ENCODE measurements at regions of chr6 and their contacts with region 1.

Region 1: DNA sequence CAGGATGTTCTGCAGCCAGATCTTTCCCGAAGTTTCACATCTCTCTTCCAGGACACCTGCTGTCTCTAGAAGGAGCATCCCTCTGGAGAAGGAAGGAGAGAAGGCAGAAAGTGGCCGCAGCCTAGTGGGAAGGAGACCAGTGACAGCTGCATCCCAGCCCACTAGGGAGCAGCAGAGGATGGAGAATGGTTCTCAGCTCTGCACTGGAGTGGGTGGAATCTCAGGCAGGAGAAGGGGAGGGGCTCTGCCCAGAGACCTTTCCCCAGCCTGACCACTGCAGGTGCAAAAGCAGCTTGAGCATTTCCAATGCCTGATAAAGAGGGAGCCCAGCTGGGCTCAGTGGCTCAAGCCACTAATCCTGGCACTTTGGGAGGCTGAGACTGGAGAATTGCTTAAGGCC is 32.3 kb downstream of the NCR2 start:
- DNase-seq: peak; percentile 25 to 56
- ATAC-seq: peak in 7 of 8 donors; percentile 59 to 80 (median 76)
- H3K4me3 ChIP-seq: no peak overlapping the region
- H3K27ac ChIP-seq: no peak overlapping the region
- H3K4me1 ChIP-seq: peaks cover 0 to 26% (median 16%) of the 10 kb centered on the region in 9 donors
- H3K27me3 ChIP-seq: peaks cover 0 to 96% (median 66%) of the 10 kb centered on the region in 7 donors
- CTCF ChIP-seq: peak; percentile 20 to 76 (median 59)

Region 2: DNA sequence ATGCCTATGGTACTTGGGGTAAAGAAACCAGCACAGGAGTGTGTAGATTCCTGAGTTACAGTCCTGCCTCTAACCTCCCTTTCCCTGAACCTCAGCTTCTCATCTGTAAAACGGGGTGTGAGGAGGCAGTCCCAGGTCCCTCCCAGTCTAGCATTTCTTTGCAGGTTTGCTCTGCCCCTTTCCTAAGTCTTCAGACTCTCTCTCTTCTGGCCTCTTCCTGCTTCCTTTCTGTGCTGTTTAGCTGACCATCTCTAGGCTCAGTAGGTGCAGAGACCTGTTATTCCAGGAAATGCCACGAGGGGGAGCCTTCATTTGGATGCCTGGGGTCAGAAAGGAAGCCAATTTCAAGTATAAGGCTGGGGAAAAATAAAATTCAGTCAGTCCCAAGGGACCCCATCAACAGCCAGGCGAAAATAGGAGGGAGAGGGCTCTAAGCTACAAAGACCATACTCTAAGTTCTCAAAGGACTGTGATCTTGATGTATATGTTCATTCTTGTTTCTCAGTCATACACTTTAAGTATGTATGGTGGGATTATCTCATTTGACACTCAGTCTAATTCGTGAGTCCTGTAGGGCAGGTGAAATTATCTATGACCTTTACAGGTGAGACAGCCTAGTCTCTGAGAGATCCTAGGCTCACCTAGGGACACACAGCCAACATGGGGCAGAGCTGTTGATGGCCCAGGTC is 56.8 kb after region 1 on chr6:
- intact Hi-C with region 1: loop called in 5 of 10 experiments (anchors 2 to 5 kb)
- DNase-seq: peak; percentile 58 to 88
- ATAC-seq: peak in 6 of 8 donors; percentile 34 to 67 (median 46)
- H3K4me3 ChIP-seq: no peak overlapping the region
- H3K27ac ChIP-seq: no peak overlapping the region
- H3K4me1 ChIP-seq: peaks cover 3 to 39% (median 28%) of the 10 kb centered on the region in 9 donors
- H3K27me3 ChIP-seq: peaks cover 0 to 51% (median 15%) of the 10 kb centered on the region in 7 donors
- CTCF ChIP-seq: peak; percentile 62 to 91 (median 85)

Region 3: GRCh38 chr6:41455818-41456217 is 88.1 kb after region 1 on chr6:
- intact Hi-C with region 1: loop called in 6 of 10 experiments (anchors 2 to 10 kb)
- DNase-seq: no peak
- ATAC-seq: no peak
- H3K4me3 ChIP-seq: no peak overlapping the region
- H3K27ac ChIP-seq: no peak overlapping the region
- H3K4me1 ChIP-seq: peaks cover 7 to 16% (median 14%) of the 10 kb centered on the region in 9 donors
- H3K27me3 ChIP-seq: peaks cover 0 to 5% (median 0%) of the 10 kb centered on the region in 7 donors
- CTCF ChIP-seq: no peak

Region 4: DNA sequence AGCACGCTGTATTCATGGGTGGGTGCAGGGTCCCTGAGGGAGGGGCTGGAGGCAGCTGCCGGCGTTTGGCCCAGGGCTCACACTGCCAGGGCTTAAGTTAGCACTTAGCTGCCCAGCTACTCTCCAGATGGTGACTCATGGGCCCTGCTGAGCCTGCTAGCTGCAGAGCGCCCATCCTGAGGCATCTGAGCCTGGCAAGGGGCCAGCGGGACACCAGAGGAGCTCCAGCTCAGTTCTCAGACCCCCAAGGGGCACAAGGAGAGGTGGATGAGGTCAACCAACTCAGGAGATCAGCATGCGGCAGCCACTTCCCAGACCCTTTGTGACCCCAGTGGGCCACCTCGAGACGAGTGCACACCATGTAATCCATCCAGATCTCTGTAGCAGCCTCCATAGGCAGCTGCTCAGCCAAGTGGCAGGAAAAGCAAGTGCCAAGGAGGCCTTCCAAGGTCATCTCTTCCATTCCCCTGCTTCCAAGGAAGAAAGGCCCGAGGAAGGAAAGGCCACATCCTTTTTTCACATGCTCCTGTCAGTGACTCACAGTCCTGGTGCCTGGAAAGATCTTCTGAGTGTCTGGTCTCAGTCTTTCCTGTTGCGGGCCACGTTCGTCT is 213.8 kb after region 1 on chr6:
- intact Hi-C with region 1: loop called in 1 of 10 experiments (anchors 5 kb)
- DNase-seq: peak; percentile 33 to 62
- ATAC-seq: peak in 6 of 8 donors; percentile 22 to 76 (median 56)
- H3K4me3 ChIP-seq: no peak overlapping the region
- H3K27ac ChIP-seq: peak overlapping the region in 2 of 10 donors; percentile 30 to 53
- H3K4me1 ChIP-seq: peaks cover 7 to 72% (median 35%) of the 10 kb centered on the region in 9 donors
- H3K27me3 ChIP-seq: no peaks in the 10 kb centered on the region
- CTCF ChIP-seq: no peak

Region 5: GRCh38 chr6:41683510-41684310 is 316.0 kb after region 1 on chr6:
- intact Hi-C with region 1: loop called (anchors 1 to 5 kb)
- DNase-seq: peak; percentile 81 to 86
- ATAC-seq: peak; percentile 81 to 89 (median 85)
- H3K4me3 ChIP-seq: peak overlapping the region; percentile 15 to 68 (median 54)
- H3K27ac ChIP-seq: peak overlapping the region; percentile 53 to 97 (median 86)
- H3K4me1 ChIP-seq: peaks cover 5 to 37% (median 23%) of the 10 kb centered on the region in 9 donors
- H3K27me3 ChIP-seq: no peaks in the 10 kb centered on the region
- CTCF ChIP-seq: peak; percentile 88 to 97 (median 96)